Motor neuron (in vitro differentiated cells): ENCODE measurements at regions of chr4 and their contacts with region 1.

Region 1: DNA sequence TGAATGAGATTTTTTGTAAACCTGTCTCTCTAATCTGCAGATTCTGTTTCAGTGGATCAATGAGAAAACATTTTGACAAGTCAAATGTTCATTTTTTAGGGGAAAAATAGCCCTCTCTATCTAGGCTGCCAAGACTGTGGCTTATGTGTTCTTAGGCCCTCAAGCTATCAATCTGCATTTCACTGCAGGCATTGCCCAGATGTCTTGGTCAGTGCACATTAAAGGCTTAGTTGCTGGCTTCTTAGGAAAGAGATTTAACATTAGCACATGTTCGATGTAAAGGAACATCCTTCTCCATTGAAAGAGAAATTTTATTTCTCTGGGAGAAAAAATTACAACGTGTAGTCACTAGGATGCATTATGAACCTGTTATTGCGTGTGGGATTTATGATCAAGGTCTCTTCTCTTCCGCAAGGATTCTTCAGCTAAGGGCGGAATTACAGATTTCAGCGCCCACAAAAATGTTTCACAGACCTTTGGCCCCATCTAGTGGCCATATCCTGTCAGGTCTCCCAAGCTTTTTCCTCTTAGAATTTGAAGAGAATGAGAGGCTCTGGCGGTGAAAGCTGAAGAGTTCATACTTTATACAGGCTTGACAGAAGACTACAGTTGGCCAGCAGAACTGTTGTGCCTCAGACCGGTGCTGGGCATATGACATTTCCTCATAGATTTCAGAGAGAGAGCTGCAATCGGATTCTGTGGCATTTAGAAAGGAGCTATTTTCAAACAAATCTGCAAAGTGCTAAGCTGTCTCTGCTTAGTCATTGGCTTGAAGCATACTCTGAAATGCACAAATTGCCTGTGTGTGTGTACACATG is 144.6 kb upstream of the NOCT start:
- ATAC-seq: peak; percentile 61 to 92 (median 89)
- H3K4me3 ChIP-seq: no peak overlapping the region
- H3K27ac ChIP-seq: no peak overlapping the region
- H3K4me1 ChIP-seq: peaks cover 2 to 12% of the 10 kb centered on the region in 2 donors

Region 2: GRCh38 chr4:138680989-138681604 is 189.8 kb before region 1 on chr4:
- in situ Hi-C with region 1: loop called in 1 of 9 experiments (anchors 25 kb)
- ATAC-seq: peak; percentile 73 to 92 (median 82)
- H3K4me3 ChIP-seq: no peak overlapping the region
- H3K27ac ChIP-seq: no peak overlapping the region
- H3K4me1 ChIP-seq: peaks cover 8 to 14% of the 10 kb centered on the region in 2 donors